ENCODE measurements at regions of chr22 and their contacts with region 1.

Region 1: DNA sequence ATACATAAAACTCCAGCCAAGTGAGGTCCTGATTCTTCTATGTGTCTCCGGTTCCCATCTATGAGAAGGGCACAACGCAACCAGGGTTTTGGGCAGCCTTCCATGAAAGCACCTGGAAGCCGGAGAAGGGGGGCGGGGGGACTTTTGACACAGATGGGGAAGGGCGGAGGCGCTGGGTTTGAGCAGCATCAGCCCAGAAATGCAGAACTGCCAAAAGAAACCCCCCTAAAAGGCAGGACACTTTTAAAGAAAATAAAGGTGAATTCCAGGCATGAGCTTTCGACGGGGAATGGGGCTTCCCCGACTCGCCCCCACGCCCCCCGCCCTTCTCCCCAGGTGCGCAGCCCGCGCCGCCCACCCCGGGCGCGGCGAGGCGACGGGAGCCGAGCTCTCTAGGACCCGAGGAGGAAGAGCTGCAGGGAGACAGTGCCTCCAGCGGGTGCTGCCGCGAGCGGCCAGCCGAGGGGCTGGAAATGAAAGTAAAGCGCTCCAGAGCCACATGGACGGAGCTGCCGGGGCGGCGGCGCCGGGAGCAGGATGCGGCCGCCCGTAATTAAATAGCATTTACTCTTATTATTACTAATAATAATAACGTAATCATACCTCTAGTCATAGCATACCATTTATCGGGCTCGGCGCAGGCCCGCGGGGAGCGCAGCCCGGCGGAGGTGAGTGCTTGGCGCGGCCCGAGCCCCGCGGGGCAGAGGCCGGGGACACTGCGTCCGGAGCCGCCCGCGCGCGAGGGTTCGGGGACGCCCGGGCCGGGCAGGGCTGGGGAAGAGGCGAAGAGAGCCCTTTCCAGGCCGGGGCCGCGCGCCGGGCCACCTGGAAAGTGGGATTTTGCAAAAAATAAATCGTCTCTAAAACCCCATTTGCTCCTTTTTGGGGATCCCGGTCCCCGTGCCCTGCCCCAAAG is at the start of gene ZC3H7B:
- DNase-seq: peak; percentile 80 to 94 (median 84)
- ATAC-seq: peak; percentile 96 to 98 (median 97)
- H3K4me3 ChIP-seq: peak within 1 kb of the TSS; percentile 59 to 98 (median 87)
- H3K27ac ChIP-seq: peak within 1 kb of the TSS; percentile 57 to 79 (median 76)
- H3K4me1 ChIP-seq: peaks cover 0 to 8% (median 4%) of the 10 kb centered on the region in 3 donors
- H3K27me3 ChIP-seq: no peaks in the 10 kb centered on the region
- CTCF ChIP-seq: peak in 3 of 4 donors; percentile 22 to 43 (median 26)
- total RNA-seq, gene ZC3H7B: 20.9 to 46.8 (median 27.0) TPM

Region 2: GRCh38 chr22:41256254-41256897 is 45.0 kb before region 1 on chr22:
- intact Hi-C with region 1: no loop called
- DNase-seq: no peak
- ATAC-seq: peak in 1 of 4 donors; percentile 33
- H3K4me3 ChIP-seq: no peak overlapping the region
- H3K27ac ChIP-seq: no peak overlapping the region
- H3K4me1 ChIP-seq: no peaks in the 10 kb centered on the region
- H3K27me3 ChIP-seq: no peaks in the 10 kb centered on the region
- CTCF ChIP-seq: no peak

Region 3: DNA sequence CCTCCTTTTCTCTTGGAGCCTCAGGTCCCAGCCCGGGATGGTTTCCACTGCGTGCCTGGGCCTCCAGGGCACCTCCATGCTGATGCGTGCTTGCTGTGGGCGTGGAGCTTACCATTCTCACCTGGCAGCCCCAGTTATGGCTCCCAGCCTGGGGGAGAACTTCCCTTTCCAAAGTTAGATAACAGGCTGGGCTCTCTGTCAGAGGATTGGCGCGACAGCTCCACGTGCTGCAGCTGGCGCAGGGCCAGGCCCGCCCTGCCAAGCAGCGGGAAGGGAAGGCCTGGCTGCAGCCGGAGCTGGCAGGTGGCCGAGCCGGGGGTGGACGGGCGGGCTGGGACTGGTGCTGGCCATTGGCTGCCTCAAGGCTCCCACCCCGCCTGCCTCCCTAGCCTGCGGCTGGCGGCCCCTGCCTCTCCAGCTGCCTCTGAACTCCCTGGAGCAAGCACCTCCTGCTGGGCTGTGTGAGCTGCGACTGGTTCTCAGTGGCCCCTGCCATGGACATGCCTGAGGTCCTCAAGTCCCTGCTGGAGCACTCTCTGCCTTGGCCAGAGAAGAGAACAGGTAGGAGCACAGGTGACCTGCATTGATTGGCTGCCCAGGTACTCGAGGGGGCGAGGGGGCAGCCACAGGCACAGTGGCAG is 65.8 kb after region 1 on chr22:
- intact Hi-C with region 1: loop called in 1 of 3 experiments (anchors 10 kb)
- DNase-seq: peak; percentile 98 to 100 (median 100)
- ATAC-seq: peak; percentile 81 to 91 (median 86)
- H3K4me3 ChIP-seq: peak overlapping the region; percentile 14 to 61 (median 56)
- H3K27ac ChIP-seq: peak overlapping the region; percentile 75 to 86 (median 80)
- H3K4me1 ChIP-seq: peaks cover 8 to 32% (median 13%) of the 10 kb centered on the region in 3 donors
- H3K27me3 ChIP-seq: no peaks in the 10 kb centered on the region
- CTCF ChIP-seq: peak in 1 of 4 donors; percentile 24

Measured in pancreas (tissue), 10 donors.